Activated CD4-positive, alpha-beta memory T cell treated with anti-CD3 and anti-CD28 coated beads, Interleukin-2, amount 10 ng/mL, durations not matched to agents 7 days and 5 days (primary cell): ENCODE measurements at regions of chr7 and their contacts with region 1.

Region 1: DNA sequence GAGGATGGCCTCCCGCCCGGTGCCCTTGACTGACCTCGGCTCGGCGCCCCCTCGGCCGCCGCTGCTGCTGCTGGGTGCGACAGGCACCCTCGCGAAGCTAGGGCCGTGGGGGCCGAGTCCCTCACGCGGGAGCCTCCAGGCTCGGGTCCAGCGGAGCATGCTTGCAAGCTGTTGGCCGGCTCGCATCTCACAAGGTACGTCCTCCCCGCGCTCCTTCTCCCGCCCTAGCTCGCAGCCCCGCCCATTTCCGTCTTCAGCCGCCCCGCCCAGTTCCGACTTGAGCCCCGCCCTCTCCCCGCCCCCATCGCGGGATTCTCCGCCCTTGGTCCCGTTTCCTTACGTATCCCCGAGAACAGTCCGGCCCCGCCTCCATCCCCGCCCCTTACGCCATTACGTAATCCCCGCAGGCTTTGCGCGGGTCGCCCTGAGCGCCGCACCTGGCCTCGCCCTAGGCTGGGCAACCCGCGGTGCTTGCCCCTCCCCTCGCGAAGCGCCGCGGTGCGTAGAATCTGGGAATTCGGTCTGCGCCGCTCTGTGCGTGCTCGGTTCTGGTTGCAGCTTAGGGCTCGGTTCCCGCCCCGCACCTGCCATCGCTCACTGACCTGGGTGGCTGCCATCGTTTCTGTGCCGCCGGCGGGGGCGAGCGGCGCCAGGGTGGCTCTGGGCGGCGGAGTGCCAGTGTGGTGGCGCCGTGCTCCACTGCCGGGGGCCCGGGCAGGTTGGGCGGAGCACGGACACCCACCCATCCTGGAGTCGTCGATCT is at the start of gene ABHD11:
- DNase-seq: peak; percentile 98
- H3K4me3 Mint-ChIP-seq: peak within 1 kb of the TSS; percentile 86
- H3K27ac Mint-ChIP-seq: peak within 1 kb of the TSS; percentile 92
- H3K4me1 Mint-ChIP-seq: peaks cover 24% of the 10 kb centered on the region
- H3K27me3 Mint-ChIP-seq: no peaks in the 10 kb centered on the region
- total RNA-seq, gene ABHD11: 12.3 to 13.7 TPM

Region 2: GRCh38 chr7:73557108-73557396 is 181.7 kb before region 1 on chr7:
- CTCF ChIA-PET with region 1: interaction called, 4 read pairs
- POLR2A ChIA-PET with region 1: interaction called, 10 read pairs
- DNase-seq: peak; percentile 95
- H3K4me3 Mint-ChIP-seq: peak overlapping the region; percentile 90
- H3K27ac Mint-ChIP-seq: peak overlapping the region; percentile 85
- H3K4me1 Mint-ChIP-seq: peaks cover 46% of the 10 kb centered on the region
- H3K27me3 Mint-ChIP-seq: no peaks in the 10 kb centered on the region

Region 3: GRCh38 chr7:73606801-73607691 is 131.7 kb before region 1 on chr7:
- CTCF ChIA-PET with region 1: interaction called, 77 read pairs
- POLR2A ChIA-PET with region 1: interaction called, 14 read pairs
- DNase-seq: peak; percentile 66
- H3K4me3 Mint-ChIP-seq: no peak overlapping the region
- H3K27ac Mint-ChIP-seq: no peak overlapping the region
- H3K4me1 Mint-ChIP-seq: no peaks in the 10 kb centered on the region
- H3K27me3 Mint-ChIP-seq: peaks cover 14% of the 10 kb centered on the region

Region 4: GRCh38 chr7:73718905-73719805 is 19.6 kb before region 1 on chr7 and contains the start of gene STX1A:
- CTCF ChIA-PET with region 1: interaction called, 10 read pairs
- POLR2A ChIA-PET with region 1: interaction called, 11 read pairs
- DNase-seq: peak; percentile 80
- H3K4me3 Mint-ChIP-seq: peak within 1 kb of the TSS; percentile 75
- H3K27ac Mint-ChIP-seq: peak within 1 kb of the TSS; percentile 70
- H3K4me1 Mint-ChIP-seq: peaks cover 33% of the 10 kb centered on the region
- H3K27me3 Mint-ChIP-seq: peaks cover 17% of the 10 kb centered on the region
- total RNA-seq, gene STX1A: 27.9 to 30.7 TPM

Region 5: GRCh38 chr7:73851410-73852234 is 112.8 kb after region 1 on chr7:
- CTCF ChIA-PET with region 1: interaction called, 17 read pairs
- POLR2A ChIA-PET with region 1: interaction called, 9 read pairs
- DNase-seq: peak; percentile 53
- H3K4me3 Mint-ChIP-seq: peak overlapping the region; percentile 18
- H3K27ac Mint-ChIP-seq: peak overlapping the region; percentile 90
- H3K4me1 Mint-ChIP-seq: peaks cover 47% of the 10 kb centered on the region
- H3K27me3 Mint-ChIP-seq: peaks cover 14% of the 10 kb centered on the region

Region 6: GRCh38 chr7:74012842-74013249 is 274.1 kb after region 1 on chr7:
- CTCF ChIA-PET with region 1: no interaction called
- POLR2A ChIA-PET with region 1: no interaction called
- DNase-seq: no peak
- H3K4me3 Mint-ChIP-seq: no peak overlapping the region
- H3K27ac Mint-ChIP-seq: no peak overlapping the region
- H3K4me1 Mint-ChIP-seq: peaks cover 2% of the 10 kb centered on the region
- H3K27me3 Mint-ChIP-seq: peaks cover 5% of the 10 kb centered on the region